ENCODE measurements at regions of chr22 and their contacts with region 1.

Region 1: DNA sequence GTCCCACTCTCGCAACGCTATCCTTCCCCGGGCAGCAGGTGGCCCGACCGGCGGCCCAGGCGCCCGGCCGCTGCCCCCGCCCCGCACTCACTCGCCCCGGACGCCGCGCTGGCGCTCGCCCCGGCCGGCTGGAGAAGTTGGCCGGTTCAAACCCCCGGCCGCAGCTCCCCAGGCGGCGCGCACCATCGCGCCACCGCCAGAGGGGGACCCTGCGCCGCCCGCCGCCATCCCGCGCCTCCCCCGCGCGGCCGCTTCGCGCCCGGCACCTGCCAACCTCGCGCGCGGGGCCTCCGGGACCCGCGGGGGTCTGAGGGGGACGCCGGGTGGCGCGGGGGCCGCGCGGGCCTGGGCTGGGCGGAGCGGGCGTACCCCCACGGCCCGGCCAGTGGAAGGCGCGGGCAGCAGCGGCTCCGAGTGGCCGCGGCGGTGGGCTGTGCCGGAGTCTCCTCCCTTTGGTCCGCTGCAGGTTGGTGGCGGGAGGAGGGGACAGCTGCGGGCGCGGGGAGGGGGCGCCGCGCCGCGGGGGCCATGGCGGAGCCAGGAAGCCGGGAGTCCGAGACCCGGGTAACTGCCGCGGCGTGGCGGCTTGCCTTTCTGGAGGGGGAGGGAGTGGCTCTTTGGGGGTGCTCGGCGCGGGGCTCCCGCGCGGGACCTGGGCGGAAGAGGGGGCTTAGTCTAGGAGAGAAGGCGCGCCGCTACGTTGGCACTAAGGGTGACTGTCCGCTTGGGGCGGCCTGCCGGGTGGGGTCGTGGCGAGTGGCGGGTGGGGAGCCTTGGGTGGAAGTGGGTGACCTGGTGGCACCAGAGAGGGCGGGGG is at the starts of genes MPST and TST:
- DNase-seq: peak; percentile 62 to 80
- H3K4me3 ChIP-seq: peak within 1 kb of the TSS; percentile 62
- H3K27ac ChIP-seq: peak within 1 kb of the TSS; percentile 17
- H3K4me1 ChIP-seq: peaks cover 42% of the 10 kb centered on the region
- H3K27me3 ChIP-seq: no peaks in the 10 kb centered on the region
- CTCF ChIP-seq: 0 out of 2 replicates have a peak, but pooled peaks have one; percentile 37
- total RNA-seq, gene MPST: 75.9 and 109 TPM in 2 replicates
- total RNA-seq, gene TST: 99.4 and 123 TPM in 2 replicates

Region 2: GRCh38 chr22:36966851-36967540 is 52.5 kb before region 1 on chr22:
- CTCF ChIA-PET with region 1: interaction called, 12 read pairs
- POLR2A ChIA-PET with region 1: no interaction called
- intact Hi-C with region 1: no loop called
- DNase-seq: no peak
- H3K4me3 ChIP-seq: no peak overlapping the region
- H3K27ac ChIP-seq: no peak overlapping the region
- H3K4me1 ChIP-seq: no peaks in the 10 kb centered on the region
- H3K27me3 ChIP-seq: no peaks in the 10 kb centered on the region
- CTCF ChIP-seq: no peak

Region 3: GRCh38 chr22:37032546-37033460 is 13.3 kb after region 1 on chr22:
- CTCF ChIA-PET with region 1: interaction called, 7 read pairs
- POLR2A ChIA-PET with region 1: interaction called, 12 read pairs
- intact Hi-C with region 1: no loop called
- DNase-seq: peak; percentile 81 to 98
- H3K4me3 ChIP-seq: peak overlapping the region; percentile 50
- H3K27ac ChIP-seq: peak overlapping the region; percentile 86
- H3K4me1 ChIP-seq: peaks cover 40% of the 10 kb centered on the region
- H3K27me3 ChIP-seq: no peaks in the 10 kb centered on the region
- CTCF ChIP-seq: no peak

Region 4: DNA sequence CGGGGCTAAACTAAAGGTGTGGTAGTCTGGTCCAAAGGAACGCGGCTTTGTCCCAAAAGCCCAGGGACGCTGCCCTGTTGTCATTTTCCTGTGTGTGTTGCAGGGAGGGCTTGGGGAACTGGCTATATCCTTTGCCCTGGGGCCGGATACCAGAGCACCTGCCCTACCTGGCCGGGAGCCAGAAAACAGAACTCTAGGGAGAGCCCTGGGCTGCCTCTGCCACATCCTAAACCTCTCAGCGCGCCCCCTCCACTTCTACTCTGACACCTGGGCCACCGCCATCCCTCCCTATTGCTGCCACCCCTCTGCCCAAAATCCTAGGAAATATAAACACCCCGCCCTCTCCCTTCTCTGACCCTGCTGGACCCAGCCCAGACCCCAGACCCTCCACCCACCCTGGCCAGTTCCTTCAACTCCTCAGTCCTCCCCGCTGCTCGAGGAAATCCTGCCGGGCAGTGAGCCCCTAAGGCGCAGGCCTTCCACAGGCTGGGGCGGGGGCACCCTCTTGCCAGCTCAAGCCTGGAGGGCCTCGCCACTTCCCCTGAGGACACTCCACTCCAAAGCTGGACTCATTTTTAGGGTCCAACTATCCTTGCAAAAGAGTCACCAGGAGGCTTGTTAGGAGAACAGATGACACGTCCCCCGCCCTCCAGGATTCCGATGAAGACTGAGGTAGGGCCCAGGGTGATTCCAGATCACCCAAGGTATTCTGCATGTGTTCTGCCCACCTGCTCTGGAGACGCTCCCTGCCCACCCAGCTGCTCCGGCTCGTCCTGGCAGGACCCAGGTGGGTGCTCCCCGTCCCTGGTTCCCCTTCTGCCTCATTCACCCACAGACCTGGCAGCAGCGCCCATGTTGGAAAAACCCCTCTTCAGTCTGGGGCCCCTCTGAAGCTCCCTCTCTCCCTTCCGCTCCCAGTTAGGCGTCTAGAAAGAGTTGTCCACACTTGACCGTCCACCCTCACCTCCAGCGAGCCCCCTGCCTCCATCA is 44.2 kb after region 1 on chr22:
- CTCF ChIA-PET with region 1: no interaction called
- POLR2A ChIA-PET with region 1: no interaction called
- intact Hi-C with region 1: no loop called
- DNase-seq: peak; percentile 55 to 66
- H3K4me3 ChIP-seq: no peak overlapping the region
- H3K27ac ChIP-seq: no peak overlapping the region
- H3K4me1 ChIP-seq: peaks cover 31% of the 10 kb centered on the region
- H3K27me3 ChIP-seq: no peaks in the 10 kb centered on the region
- CTCF ChIP-seq: no peak

Region 5: GRCh38 chr22:37098976-37099591 is 79.6 kb after region 1 on chr22:
- CTCF ChIA-PET with region 1: no interaction called
- POLR2A ChIA-PET with region 1: no interaction called
- intact Hi-C with region 1: no loop called
- DNase-seq: no peak
- H3K4me3 ChIP-seq: no peak overlapping the region
- H3K27ac ChIP-seq: no peak overlapping the region
- H3K4me1 ChIP-seq: no peaks in the 10 kb centered on the region
- H3K27me3 ChIP-seq: peaks cover 42% of the 10 kb centered on the region
- CTCF ChIP-seq: 0 out of 2 replicates have a peak, but pooled peaks have one; percentile 36

Region 6: GRCh38 chr22:38114484-38115398 is 1095.2 kb after region 1 on chr22:
- CTCF ChIA-PET with region 1: interaction called, 14 read pairs
- POLR2A ChIA-PET with region 1: no interaction called
- intact Hi-C with region 1: no loop called
- DNase-seq: peak; percentile 69 to 90
- H3K4me3 ChIP-seq: no peak overlapping the region
- H3K27ac ChIP-seq: no peak overlapping the region
- H3K4me1 ChIP-seq: peaks cover 14% of the 10 kb centered on the region
- H3K27me3 ChIP-seq: no peaks in the 10 kb centered on the region
- CTCF ChIP-seq: peak; percentile 99

Measured in PC-9 (cell line).